Right ventricle myocardium inferior (tissue), 1 donor: ENCODE measurements at regions of chr5 and their contacts with region 1.

Region 1: GRCh38 chr5:1090538-1090937 is 21.3 kb downstream of the SLC12A7 start:
- DNase-seq: no peak
- ATAC-seq: peak; percentile 41

Region 2: DNA sequence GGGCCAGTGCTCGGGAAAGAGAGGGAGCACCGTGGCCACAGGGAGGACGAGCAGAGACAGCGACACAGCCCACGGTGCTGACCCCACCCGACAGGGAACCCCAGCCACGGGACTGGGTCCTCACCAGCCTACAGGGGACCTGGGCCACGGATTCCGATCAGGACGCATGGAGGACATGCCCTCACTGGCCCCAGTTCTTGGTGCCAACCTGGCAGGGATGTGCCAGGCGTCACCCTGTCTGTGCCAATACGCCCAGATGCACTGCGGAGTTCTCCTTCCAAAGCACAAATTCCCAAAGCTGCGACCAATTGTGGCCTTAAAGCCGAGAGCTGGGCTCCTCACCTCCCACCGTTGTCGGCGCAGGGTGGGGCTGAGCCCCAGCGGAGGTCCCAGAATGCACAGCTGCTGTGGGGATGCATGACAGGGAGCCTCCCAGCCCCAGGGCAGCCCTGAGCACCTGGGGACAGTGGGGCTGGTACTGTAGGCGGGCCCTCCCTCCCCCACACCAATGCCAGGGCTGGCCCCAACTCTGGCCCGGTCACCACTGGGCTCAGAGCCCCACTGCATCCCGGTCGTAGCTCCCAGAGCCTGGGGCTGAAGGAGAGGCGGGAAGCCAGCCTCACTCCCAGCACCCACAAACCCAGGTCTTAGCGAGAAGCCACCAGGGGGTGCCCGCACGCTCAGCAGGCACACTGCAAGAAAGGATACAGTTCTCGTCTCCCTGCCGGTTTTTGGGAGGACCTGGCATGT is 37.7 kb before region 1 on chr5:
- intact Hi-C with region 1: loop called (anchors 5 kb)
- DNase-seq: peak; percentile 70
- ATAC-seq: peak; percentile 61

Region 3: GRCh38 chr5:1068204-1068894 is 22.2 kb before region 1 on chr5:
- intact Hi-C with region 1: loop called (anchors 2 kb)
- DNase-seq: peak; percentile 83
- ATAC-seq: peak; percentile 92

Region 4: GRCh38 chr5:1125030-1125357 is 34.5 kb after region 1 on chr5:
- intact Hi-C with region 1: loop called (anchors 5 kb)
- DNase-seq: peak; percentile 89
- ATAC-seq: peak; percentile 88

Region 5: DNA sequence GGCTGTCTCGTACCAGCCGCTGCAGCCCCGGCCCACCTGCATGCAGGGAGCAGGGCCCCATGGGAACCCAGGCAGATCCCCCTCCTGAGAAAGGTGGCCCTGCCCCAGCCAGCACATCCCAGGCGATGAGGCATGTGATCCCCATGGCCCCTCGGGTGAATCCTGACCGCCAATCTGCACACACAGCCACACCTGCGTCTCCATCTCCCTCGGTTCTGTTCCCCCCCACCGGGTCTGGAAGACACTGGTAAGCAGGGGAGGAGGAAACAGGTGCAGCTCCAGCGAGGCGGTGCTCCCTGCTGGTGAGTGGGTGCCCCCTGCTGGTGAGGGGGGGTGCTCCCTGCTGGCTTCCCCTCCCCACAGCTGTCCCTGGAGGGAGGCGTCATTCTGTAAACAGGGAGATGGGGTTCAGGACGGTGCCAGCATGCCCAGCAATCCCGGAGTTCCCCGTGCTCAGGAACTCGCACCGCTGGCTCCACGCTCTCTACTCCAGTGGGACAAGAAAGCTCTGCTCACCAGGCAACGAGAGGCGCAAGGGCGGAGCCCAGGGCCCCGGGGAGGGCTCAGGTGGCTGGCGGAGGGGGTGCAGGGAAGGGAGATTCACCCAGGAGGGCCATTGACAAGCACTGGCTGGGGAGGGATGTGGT is 49.8 kb after region 1 on chr5:
- intact Hi-C with region 1: loop called (anchors 2 kb)
- DNase-seq: peak; percentile 81
- ATAC-seq: peak; percentile 85